HepG2 (cell line): ENCODE measurements at regions of chr17 and their contacts with region 1.

Region 1: DNA sequence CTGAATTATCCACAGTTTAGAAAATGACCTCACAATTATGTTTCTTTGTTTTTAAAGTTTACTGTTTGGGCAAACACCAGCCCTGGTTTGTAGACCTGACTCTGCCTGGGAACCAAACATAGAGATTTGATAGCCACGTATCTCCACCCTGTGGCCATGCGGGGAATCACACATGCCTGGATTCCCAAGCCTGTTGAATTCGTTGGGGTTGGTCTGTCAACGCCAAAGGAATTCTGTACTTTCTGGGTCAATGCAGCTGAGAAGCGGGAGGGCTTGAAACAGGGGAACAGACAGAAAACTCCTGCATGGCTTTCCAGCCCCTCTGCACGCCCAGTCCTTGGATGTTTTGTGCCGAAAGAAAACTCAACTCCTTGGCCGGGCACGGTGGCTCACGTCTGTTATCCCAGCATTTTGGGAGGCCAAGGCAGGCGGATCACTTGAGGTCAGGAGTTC is 27.0 kb downstream of the CD300A start:
- DNase-seq: peak; percentile 71
- ATAC-seq: peak; percentile 97
- H3K4me3 ChIP-seq: no peak overlapping the region
- H3K27ac ChIP-seq: no peak overlapping the region
- H3K4me1 ChIP-seq: no peaks in the 10 kb centered on the region
- H3K27me3 ChIP-seq: peaks cover 0 to 5% of the 10 kb centered on the region in 2 experiments; a peak in 2 of 5 replicates
- CTCF ChIP-seq: peak; percentile 94
- EP300 ChIP-seq: no peak
- POLR2A ChIP-seq: no peak
- RAD21 ChIP-seq: peak; percentile 89

Region 2: GRCh38 chr17:74296548-74296936 is 196.9 kb before region 1 on chr17:
- CTCF ChIA-PET with region 1: interaction called, 10 read pairs
- POLR2A ChIA-PET with region 1: no interaction called
- in situ Hi-C with region 1: no loop called
- intact Hi-C with region 1: loop called (anchors 10 kb)
- DNase-seq: peak; percentile 65
- ATAC-seq: peak; percentile 87
- H3K4me3 ChIP-seq: no peak overlapping the region
- H3K27ac ChIP-seq: no peak overlapping the region
- H3K4me1 ChIP-seq: peaks cover 8% of the 10 kb centered on the region; the same call in 1 of the 2 replicates
- H3K27me3 ChIP-seq: peaks cover 10 to 18% of the 10 kb centered on the region in 2 experiments
- CTCF ChIP-seq: peak; percentile 75
- EP300 ChIP-seq: no peak
- POLR2A ChIP-seq: no peak
- RAD21 ChIP-seq: 0 out of 2 replicates have a peak, but pooled peaks have one; percentile 24

Region 3: GRCh38 chr17:74305865-74306654 is 187.3 kb before region 1 on chr17:
- CTCF ChIA-PET with region 1: interaction called, 10 read pairs
- POLR2A ChIA-PET with region 1: no interaction called
- in situ Hi-C with region 1: no loop called
- intact Hi-C with region 1: loop called (anchors 10 kb)
- DNase-seq: no peak
- ATAC-seq: no peak
- H3K4me3 ChIP-seq: no peak overlapping the region
- H3K27ac ChIP-seq: no peak overlapping the region
- H3K4me1 ChIP-seq: no peaks in the 10 kb centered on the region
- H3K27me3 ChIP-seq: peaks cover 0 to 18% of the 10 kb centered on the region in 2 experiments; a peak in 3 of 5 replicates
- CTCF ChIP-seq: peak; percentile 46
- EP300 ChIP-seq: no peak
- POLR2A ChIP-seq: no peak
- RAD21 ChIP-seq: no peak

Region 4: DNA sequence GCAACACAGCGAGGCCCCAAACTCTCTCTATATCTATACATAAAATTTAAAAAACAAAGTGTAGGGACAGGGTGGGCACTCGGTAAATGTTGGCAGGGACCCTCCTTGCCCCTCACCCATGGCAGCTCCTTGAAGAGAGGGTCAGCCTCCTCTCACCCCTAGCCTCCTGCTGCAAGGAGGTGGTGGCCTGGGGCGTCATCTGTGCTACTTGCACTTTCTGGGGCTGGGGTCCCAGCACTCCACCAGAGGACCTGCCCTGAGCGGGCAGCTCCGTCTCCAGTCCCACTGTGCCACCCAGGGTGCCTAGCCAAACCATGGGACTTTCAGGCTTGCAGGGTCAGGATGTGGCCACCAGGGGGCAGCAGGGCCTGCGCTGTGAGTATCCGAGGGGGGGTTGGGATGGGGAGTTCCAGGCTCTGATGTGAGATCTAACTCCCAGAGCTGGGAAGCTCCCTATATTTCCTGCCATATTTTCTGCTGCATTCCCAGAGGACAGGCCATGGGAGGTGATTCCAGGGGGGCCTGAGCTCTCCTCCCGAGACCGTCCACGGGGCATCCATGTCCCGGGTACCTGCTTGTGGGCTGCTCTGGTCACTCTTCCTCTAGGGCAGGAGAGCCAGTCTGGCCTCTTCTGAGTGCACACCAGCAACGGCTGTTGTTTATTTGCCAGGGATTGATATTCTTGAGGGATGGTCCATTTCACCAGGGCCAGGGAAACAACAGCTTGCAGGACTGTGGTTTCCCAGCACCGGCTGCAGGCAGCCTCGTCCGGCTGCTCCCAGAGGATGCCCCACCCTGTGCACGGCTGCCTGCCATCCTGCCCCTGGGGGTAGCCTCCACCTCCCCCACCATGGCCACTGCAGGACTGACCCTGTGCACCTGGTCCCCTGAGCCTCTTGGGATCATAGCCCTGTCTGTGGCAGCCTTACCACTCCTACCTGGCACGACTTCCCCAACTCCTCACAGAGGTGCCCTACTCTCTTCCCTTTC is 125.0 kb before region 1 on chr17:
- CTCF ChIA-PET with region 1: interaction called, 29 read pairs
- POLR2A ChIA-PET with region 1: no interaction called
- in situ Hi-C with region 1: no loop called
- intact Hi-C with region 1: loop called (anchors 1 kb)
- DNase-seq: peak; percentile 53
- ATAC-seq: peak; percentile 76
- H3K4me3 ChIP-seq: no peak overlapping the region
- H3K27ac ChIP-seq: no peak overlapping the region
- H3K4me1 ChIP-seq: peaks cover 3% of the 10 kb centered on the region
- H3K27me3 ChIP-seq: peaks cover 3 to 41% of the 10 kb centered on the region in 2 experiments; a peak in 4 of 5 replicates
- CTCF ChIP-seq: peak; percentile 93
- EP300 ChIP-seq: no peak
- POLR2A ChIP-seq: no peak
- RAD21 ChIP-seq: peak; percentile 89

Region 5: GRCh38 chr17:74379495-74380085 is 113.8 kb before region 1 on chr17:
- CTCF ChIA-PET with region 1: interaction called, 30 read pairs
- POLR2A ChIA-PET with region 1: no interaction called
- in situ Hi-C with region 1: no loop called
- intact Hi-C with region 1: loop called (anchors 1 kb)
- DNase-seq: peak; percentile 81
- ATAC-seq: peak; percentile 94
- H3K4me3 ChIP-seq: peak overlapping the region in 1 of 3 experiments; percentile 34; a peak in 1 of 6 replicates
- H3K27ac ChIP-seq: no peak overlapping the region
- H3K4me1 ChIP-seq: peaks cover 27% of the 10 kb centered on the region
- H3K27me3 ChIP-seq: 0 out of 5 replicates have a peak, but pooled peaks cover 0 to 12% of the 10 kb centered on the region in 2 experiments
- CTCF ChIP-seq: peak; percentile 100
- EP300 ChIP-seq: no peak
- POLR2A ChIP-seq: no peak
- RAD21 ChIP-seq: peak; percentile 100

Region 6: DNA sequence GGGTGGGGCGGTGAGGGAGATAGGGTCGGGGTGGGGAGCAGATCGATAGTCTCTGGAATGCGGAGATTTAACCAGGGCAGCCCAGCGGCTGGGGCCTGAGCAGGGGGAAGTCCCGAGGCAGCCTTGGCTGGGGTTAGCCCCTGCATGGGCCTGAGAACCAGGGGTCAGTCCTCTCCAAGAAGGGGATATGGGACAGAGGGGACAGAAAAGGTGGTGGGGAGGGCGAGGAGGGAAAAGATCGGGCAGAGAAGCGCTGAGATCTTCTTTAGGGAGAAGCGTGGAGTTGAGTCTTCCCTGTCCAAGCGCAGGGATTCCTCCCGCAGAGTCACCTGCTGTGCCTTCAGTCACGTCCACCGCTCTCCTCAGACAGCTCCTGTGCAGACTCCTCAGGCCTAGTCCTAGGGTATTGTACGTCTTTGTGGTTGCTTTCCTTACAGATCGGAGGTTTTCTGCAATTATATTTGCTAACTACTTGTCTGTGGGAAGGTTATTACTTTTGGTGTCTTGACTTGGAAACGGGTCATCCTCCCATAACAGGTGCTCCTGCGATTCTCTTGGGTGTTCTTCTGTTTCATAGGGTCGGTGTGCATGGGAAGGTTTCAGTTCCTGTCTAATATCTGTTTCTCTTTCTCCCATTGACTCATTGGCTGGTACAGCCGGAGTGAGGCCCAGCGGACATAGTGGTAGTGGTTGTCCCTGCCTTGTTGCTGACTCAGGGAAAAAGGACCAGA is 26.0 kb before region 1 on chr17:
- CTCF ChIA-PET with region 1: no interaction called
- POLR2A ChIA-PET with region 1: no interaction called
- in situ Hi-C with region 1: no loop called
- intact Hi-C with region 1: no loop called
- DNase-seq: no peak
- ATAC-seq: peak; percentile 50
- H3K4me3 ChIP-seq: no peak overlapping the region
- H3K27ac ChIP-seq: no peak overlapping the region
- H3K4me1 ChIP-seq: peaks cover 26% of the 10 kb centered on the region
- H3K27me3 ChIP-seq: peaks cover 0 to 12% of the 10 kb centered on the region in 2 experiments; a peak in 1 of 5 replicates
- CTCF ChIP-seq: no peak
- EP300 ChIP-seq: no peak
- POLR2A ChIP-seq: no peak
- RAD21 ChIP-seq: no peak

Region 7: DNA sequence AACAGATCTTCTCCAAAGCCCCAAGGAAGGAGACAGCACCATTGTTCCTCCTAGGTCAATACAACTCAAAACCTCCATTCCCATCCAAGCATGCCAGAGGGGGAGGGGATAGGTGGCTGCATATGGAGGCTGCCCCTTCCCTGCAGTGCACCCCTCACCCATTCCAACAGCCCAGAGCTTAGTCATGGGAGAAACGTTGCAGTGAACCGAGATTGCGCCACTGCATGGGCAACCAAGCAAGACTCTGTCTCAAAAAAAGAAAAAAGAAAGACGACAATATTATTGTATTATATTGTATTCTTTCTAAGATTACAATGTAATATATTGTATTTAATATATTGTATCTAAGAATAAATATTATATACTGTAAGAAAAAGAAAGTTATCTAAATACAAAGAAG is 166.5 kb after region 1 on chr17:
- CTCF ChIA-PET with region 1: no interaction called
- POLR2A ChIA-PET with region 1: no interaction called
- in situ Hi-C with region 1: no loop called
- intact Hi-C with region 1: no loop called
- DNase-seq: no peak
- ATAC-seq: no peak
- H3K4me3 ChIP-seq: no peak overlapping the region
- H3K27ac ChIP-seq: no peak overlapping the region
- H3K4me1 ChIP-seq: no peaks in the 10 kb centered on the region
- H3K27me3 ChIP-seq: peaks cover 0 to 20% of the 10 kb centered on the region in 2 experiments; a peak in 3 of 5 replicates
- CTCF ChIP-seq: no peak
- EP300 ChIP-seq: no peak
- POLR2A ChIP-seq: no peak
- RAD21 ChIP-seq: no peak